ENCODE measurements at regions of chr16 and their contacts with region 1.

Region 1: DNA sequence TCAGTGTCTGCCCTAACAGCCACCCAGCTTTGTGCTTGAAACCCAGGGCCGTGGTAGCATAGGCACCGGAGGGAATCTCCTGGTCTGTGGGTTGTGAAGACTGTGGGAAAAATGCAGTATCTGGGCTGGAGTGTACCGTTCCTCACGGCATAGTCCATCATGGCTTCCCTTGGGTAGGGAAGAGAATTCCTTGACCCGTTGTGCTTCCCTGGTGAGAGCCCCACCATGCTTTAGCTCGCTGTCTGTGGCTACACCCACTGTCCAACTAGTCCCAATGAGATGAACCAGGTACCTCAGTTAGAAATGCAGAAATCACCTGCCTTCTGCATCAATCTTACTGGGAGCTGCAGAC is 67.3 kb downstream of the ATF7IP2 start:
- DNase-seq: no peak
- ATAC-seq: no peak
- H3K4me3 ChIP-seq: no peak overlapping the region
- H3K4me3 Mint-ChIP-seq: no peak overlapping the region
- H3K27ac ChIP-seq: no peak overlapping the region
- H3K27ac Mint-ChIP-seq: no peak overlapping the region
- H3K4me1 ChIP-seq: peaks cover 6% of the 10 kb centered on the region
- H3K4me1 Mint-ChIP-seq: peaks cover 27% of the 10 kb centered on the region
- H3K27me3 ChIP-seq: no peaks in the 10 kb centered on the region
- H3K27me3 Mint-ChIP-seq: no peaks in the 10 kb centered on the region
- CTCF ChIP-seq: no peak

Region 2: DNA sequence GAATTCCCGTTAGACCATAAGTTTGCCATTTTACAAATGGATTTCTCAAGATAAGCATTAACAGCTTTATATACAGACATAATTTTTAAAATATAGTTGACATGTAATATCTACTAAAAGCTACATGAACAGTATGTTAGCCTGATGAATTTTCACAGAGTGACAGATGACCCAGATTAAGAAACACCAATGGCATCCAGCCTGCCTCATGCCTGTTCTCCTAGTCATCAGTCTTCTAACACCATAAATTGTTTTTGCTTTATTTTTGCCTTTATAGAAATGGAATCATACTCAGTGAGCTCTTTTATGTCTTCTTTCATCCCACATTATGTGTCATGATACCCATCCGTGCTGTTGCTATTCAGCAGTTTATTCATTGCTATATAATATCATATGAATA is 12.7 kb after region 1 on chr16:
- CTCF ChIA-PET with region 1: no interaction called
- POLR2A ChIA-PET with region 1: no interaction called
- intact Hi-C with region 1: loop called in 1 of 2 experiments (anchors 2 kb)
- DNase-seq: no peak
- ATAC-seq: no peak
- H3K4me3 ChIP-seq: no peak overlapping the region
- H3K4me3 Mint-ChIP-seq: no peak overlapping the region
- H3K27ac ChIP-seq: no peak overlapping the region
- H3K27ac Mint-ChIP-seq: no peak overlapping the region
- H3K4me1 ChIP-seq: no peaks in the 10 kb centered on the region
- H3K4me1 Mint-ChIP-seq: no peaks in the 10 kb centered on the region
- H3K27me3 ChIP-seq: no peaks in the 10 kb centered on the region
- H3K27me3 Mint-ChIP-seq: no peaks in the 10 kb centered on the region
- CTCF ChIP-seq: no peak

Region 3: DNA sequence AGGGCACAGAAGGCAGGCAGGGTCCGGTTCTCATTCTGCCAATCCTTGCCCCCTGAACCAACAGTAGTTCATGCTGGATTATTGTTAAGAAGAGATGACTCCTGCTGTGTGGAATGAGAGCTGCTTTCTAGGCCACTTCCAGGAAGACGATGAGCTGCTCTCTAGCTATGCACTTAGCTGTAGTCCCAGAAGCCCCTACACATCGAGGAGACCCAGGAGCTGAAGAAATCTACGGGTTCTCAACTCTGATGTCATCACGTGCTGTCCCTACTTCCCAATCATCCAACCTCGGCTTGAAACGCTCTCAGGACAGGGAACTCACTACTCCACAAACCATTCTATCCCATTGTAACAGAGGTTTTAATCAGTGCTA is 156.3 kb after region 1 on chr16:
- CTCF ChIA-PET with region 1: no interaction called
- POLR2A ChIA-PET with region 1: no interaction called
- intact Hi-C with region 1: no loop called
- DNase-seq: no peak
- ATAC-seq: no peak
- H3K4me3 ChIP-seq: no peak overlapping the region
- H3K4me3 Mint-ChIP-seq: no peak overlapping the region
- H3K27ac ChIP-seq: no peak overlapping the region
- H3K27ac Mint-ChIP-seq: no peak overlapping the region
- H3K4me1 ChIP-seq: no peaks in the 10 kb centered on the region
- H3K4me1 Mint-ChIP-seq: no peaks in the 10 kb centered on the region
- H3K27me3 ChIP-seq: no peaks in the 10 kb centered on the region
- H3K27me3 Mint-ChIP-seq: peaks cover 10% of the 10 kb centered on the region
- CTCF ChIP-seq: no peak